CD14-positive monocyte (primary cell): ENCODE measurements at regions of chr10 and their contacts with region 1.

Region 1: DNA sequence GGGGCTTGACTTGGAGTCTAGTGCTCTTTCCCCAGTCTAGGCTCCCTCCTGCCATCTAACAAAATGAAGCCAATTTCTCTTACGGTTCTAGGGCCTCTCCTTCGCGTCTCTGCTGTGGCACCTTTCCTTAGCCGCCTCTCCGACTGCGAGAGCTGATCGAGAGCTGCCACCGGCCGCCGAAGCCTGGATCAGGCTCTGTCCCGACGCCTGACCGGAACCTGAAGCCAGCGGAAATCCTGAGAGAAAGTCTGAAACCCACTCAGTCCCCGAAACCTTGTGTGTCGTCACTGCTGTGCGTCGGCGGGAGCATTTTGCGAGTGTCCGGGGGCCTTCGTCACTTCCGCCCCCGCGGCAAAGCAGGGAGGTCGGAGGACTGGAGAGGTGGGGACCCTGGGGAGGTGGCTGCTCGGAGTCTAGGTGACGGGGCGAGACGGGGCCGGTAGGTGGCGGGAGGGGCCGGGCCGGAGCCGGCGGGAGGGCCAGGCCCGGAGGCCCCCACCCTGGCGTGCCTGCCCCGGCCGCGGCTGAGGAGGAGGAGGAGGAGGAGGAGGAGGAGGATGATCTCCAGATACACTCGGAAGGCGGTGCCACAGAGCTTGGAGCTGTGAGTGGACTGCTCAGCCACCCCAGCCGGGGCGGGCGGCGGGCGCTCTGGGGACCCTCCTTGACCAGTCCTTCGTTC is at the starts of genes ECD and FAM149B1:
- DNase-seq: peak; percentile 86 to 95 (median 91)
- H3K4me3 ChIP-seq: peak within 1 kb of the TSS; percentile 94 to 98 (median 97)
- H3K4me3 Mint-ChIP-seq: peak within 1 kb of the TSS; percentile 98 to 99
- H3K27ac ChIP-seq: peak within 1 kb of the TSS; percentile 96 to 100
- H3K27ac Mint-ChIP-seq: peak within 1 kb of the TSS; percentile 99 to 100 (median 100)
- H3K4me1 ChIP-seq: peaks cover 14 to 26% of the 10 kb centered on the region in 2 donors
- H3K4me1 Mint-ChIP-seq: peaks cover 22% of the 10 kb centered on the region
- H3K27me3 ChIP-seq: no peaks in the 10 kb centered on the region
- H3K27me3 Mint-ChIP-seq: peaks cover 0 to 3% (median 0%) of the 10 kb centered on the region in 3 donors
- CTCF ChIP-seq: no peak
- polyA plus RNA-seq, gene ECD: 14.1 to 20.2 (median 16.7) TPM
- polyA plus RNA-seq, gene FAM149B1: 2.6 to 19.3 (median 2.6) TPM

Region 2: DNA sequence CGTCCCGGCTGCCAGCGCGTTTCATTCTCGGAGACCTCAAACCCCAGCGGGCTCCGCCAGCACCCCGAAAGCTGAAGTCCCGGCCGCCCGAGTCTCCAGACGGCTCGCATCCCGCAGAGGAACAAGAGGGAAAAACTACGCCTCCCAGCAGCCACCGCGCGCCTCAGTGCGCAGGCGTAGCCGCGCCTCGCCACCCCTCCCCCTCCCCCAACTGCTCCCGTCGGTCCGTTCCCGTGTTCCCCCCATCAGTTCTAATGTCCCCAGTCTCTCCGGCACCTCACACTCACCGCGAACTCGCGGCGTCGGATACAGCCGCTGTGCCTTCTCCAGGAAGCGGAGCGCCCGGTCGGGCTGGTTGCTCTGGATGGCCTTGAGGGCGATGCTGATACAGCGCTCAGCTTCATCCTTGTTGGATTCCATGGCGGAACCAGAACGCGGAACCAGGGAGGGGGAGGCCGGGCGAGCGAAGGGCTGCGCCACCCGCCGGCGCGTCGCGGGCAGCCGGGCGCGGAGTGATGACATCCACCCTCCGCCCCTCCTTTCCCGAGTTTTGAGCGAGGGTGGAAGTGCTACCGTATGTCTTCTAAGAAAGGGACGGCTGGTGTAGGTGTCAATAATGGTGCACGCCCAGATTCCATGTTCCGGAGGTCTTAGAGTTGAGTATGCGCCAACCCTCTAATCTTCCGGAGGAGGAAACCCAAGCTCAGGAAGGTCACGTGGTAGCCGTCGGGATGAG is 813.3 kb before region 1 on chr10 and contains the start of gene DNAJB12:
- intact Hi-C with region 1: loop called in 1 of 2 experiments (anchors 5 kb)
- DNase-seq: peak; percentile 89 to 93 (median 93)
- H3K4me3 ChIP-seq: peak within 1 kb of the TSS; percentile 85 to 89 (median 86)
- H3K4me3 Mint-ChIP-seq: peak within 1 kb of the TSS; percentile 97 to 99
- H3K27ac ChIP-seq: peak within 1 kb of the TSS; percentile 88 to 96
- H3K27ac Mint-ChIP-seq: peak within 1 kb of the TSS; percentile 96 to 100 (median 99)
- H3K4me1 ChIP-seq: peaks cover 19 to 23% of the 10 kb centered on the region in 2 donors
- H3K4me1 Mint-ChIP-seq: peaks cover 43% of the 10 kb centered on the region
- H3K27me3 ChIP-seq: no peaks in the 10 kb centered on the region
- H3K27me3 Mint-ChIP-seq: peaks cover 0 to 2% (median 1%) of the 10 kb centered on the region in 3 donors
- CTCF ChIP-seq: no peak
- polyA plus RNA-seq, gene DNAJB12: 26.5 to 42.5 (median 37.9) TPM

Region 3: DNA sequence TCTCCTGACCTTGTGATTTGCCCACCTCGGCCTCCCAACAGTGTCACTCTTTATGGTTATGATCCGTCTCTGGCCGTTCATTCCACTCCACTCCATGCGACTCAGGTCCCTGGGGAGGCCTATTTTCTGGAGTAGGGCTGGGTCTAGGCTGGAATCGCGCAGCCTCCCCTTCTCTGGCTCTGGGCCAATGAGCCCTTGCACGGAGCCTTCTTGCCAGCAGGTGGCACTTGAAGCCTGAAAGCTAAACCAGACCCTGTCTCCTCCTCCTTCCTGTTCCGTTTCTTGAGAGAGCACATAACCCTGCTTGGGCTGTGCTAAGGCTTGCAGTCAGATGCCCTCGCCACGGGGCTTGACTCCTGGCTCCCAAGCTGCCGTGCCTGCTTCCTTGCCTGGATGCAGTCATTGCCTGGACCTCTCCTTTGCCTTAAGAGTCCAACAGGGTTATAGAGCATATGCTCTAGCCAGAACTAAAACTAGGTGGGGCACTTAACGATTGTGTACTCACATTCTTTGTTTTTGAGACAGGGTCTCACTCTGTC is 803.6 kb before region 1 on chr10:
- intact Hi-C with region 1: loop called in 1 of 2 experiments (anchors 5 kb)
- DNase-seq: peak; percentile 80 to 87 (median 85)
- H3K4me3 ChIP-seq: peak overlapping the region in 1 of 3 experiments; percentile 18
- H3K4me3 Mint-ChIP-seq: peak overlapping the region in 1 of 2 donors; percentile 65
- H3K27ac ChIP-seq: peak overlapping the region; percentile 26 to 60
- H3K27ac Mint-ChIP-seq: peak overlapping the region in 5 of 7 donors; percentile 22 to 77 (median 56)
- H3K4me1 ChIP-seq: peaks cover 10 to 11% of the 10 kb centered on the region in 2 donors
- H3K4me1 Mint-ChIP-seq: peaks cover 15% of the 10 kb centered on the region
- H3K27me3 ChIP-seq: no peaks in the 10 kb centered on the region
- H3K27me3 Mint-ChIP-seq: no peaks in the 10 kb centered on the region
- CTCF ChIP-seq: peak; percentile 83

Region 4: GRCh38 chr10:73096449-73097304 is 71.2 kb before region 1 on chr10 and contains the start of gene P4HA1:
- intact Hi-C with region 1: loop called in 1 of 2 experiments (anchors 5 kb)
- DNase-seq: peak; percentile 98 to 99 (median 99)
- H3K4me3 ChIP-seq: peak within 1 kb of the TSS; percentile 58 to 98 (median 93)
- H3K4me3 Mint-ChIP-seq: peak within 1 kb of the TSS; percentile 95 to 96
- H3K27ac ChIP-seq: peak within 1 kb of the TSS; percentile 92 to 96
- H3K27ac Mint-ChIP-seq: peak within 1 kb of the TSS; percentile 87 to 97 (median 95)
- H3K4me1 ChIP-seq: peaks cover 13 to 21% of the 10 kb centered on the region in 2 donors
- H3K4me1 Mint-ChIP-seq: peaks cover 23% of the 10 kb centered on the region
- H3K27me3 ChIP-seq: no peaks in the 10 kb centered on the region
- H3K27me3 Mint-ChIP-seq: no peaks in the 10 kb centered on the region
- CTCF ChIP-seq: peak; percentile 79
- polyA plus RNA-seq, gene P4HA1: 20.1 to 44.3 (median 43.9) TPM

Region 5: GRCh38 chr10:73110345-73110849 is 57.5 kb before region 1 on chr10 and contains the start of gene NUDT13:
- intact Hi-C with region 1: loop called (anchors 5 to 10 kb)
- DNase-seq: peak; percentile 75 to 90 (median 80)
- H3K4me3 ChIP-seq: peak within 1 kb of the TSS; percentile 49 to 96 (median 82)
- H3K4me3 Mint-ChIP-seq: peak within 1 kb of the TSS; percentile 82 to 93
- H3K27ac ChIP-seq: peak within 1 kb of the TSS; percentile 9 to 75
- H3K27ac Mint-ChIP-seq: peak within 1 kb of the TSS; percentile 86 to 94 (median 93)
- H3K4me1 ChIP-seq: peaks cover 5 to 8% of the 10 kb centered on the region in 2 donors
- H3K4me1 Mint-ChIP-seq: peaks cover 12% of the 10 kb centered on the region
- H3K27me3 ChIP-seq: no peaks in the 10 kb centered on the region
- H3K27me3 Mint-ChIP-seq: peaks cover 0 to 2% (median 0%) of the 10 kb centered on the region in 3 donors
- CTCF ChIP-seq: no peak
- polyA plus RNA-seq, gene NUDT13: 0.69 to 4.5 (median 1.0) TPM

Region 6: DNA sequence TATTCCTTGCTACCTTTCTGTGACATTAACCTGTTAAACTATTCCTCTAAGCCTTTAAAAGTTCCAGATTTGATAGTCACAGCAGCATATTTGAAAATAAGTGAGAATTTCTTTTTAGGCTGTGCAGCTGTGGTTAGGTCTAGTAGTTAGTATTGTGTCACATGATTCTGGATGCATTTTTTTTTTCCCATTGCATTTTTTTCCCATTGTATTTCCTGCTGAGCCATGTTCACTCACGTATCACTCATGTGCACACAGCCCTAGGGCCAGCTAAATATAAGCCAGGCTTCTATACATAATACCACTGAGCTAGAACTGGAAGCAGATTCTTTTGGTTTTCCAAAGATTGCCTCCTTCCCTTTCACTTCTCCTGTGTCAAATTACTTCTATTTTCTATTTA is 41.8 kb after region 1 on chr10:
- intact Hi-C with region 1: no loop called
- DNase-seq: no peak
- H3K4me3 ChIP-seq: no peak overlapping the region
- H3K4me3 Mint-ChIP-seq: no peak overlapping the region
- H3K27ac ChIP-seq: no peak overlapping the region
- H3K27ac Mint-ChIP-seq: no peak overlapping the region
- H3K4me1 ChIP-seq: no peaks in the 10 kb centered on the region
- H3K4me1 Mint-ChIP-seq: no peaks in the 10 kb centered on the region
- H3K27me3 ChIP-seq: no peaks in the 10 kb centered on the region
- H3K27me3 Mint-ChIP-seq: no peaks in the 10 kb centered on the region
- CTCF ChIP-seq: no peak

Region 7: GRCh38 chr10:73246783-73247508 is 79.0 kb after region 1 on chr10 and contains the start of gene DNAJC9:
- intact Hi-C with region 1: loop called in 1 of 2 experiments (anchors 5 kb)
- DNase-seq: peak; percentile 84 to 92 (median 92)
- H3K4me3 ChIP-seq: peak within 1 kb of the TSS; percentile 69 to 92 (median 71)
- H3K4me3 Mint-ChIP-seq: peak within 1 kb of the TSS; percentile 91 to 96
- H3K27ac ChIP-seq: peak within 1 kb of the TSS; percentile 51 to 83
- H3K27ac Mint-ChIP-seq: peak within 1 kb of the TSS; percentile 81 to 94 (median 90)
- H3K4me1 ChIP-seq: peaks cover 33 to 53% of the 10 kb centered on the region in 2 donors
- H3K4me1 Mint-ChIP-seq: peaks cover 50% of the 10 kb centered on the region
- H3K27me3 ChIP-seq: no peaks in the 10 kb centered on the region
- H3K27me3 Mint-ChIP-seq: peaks cover 0 to 2% (median 0%) of the 10 kb centered on the region in 3 donors
- CTCF ChIP-seq: no peak
- polyA plus RNA-seq, gene DNAJC9: 2.3 to 7.2 (median 2.4) TPM

Region 8: DNA sequence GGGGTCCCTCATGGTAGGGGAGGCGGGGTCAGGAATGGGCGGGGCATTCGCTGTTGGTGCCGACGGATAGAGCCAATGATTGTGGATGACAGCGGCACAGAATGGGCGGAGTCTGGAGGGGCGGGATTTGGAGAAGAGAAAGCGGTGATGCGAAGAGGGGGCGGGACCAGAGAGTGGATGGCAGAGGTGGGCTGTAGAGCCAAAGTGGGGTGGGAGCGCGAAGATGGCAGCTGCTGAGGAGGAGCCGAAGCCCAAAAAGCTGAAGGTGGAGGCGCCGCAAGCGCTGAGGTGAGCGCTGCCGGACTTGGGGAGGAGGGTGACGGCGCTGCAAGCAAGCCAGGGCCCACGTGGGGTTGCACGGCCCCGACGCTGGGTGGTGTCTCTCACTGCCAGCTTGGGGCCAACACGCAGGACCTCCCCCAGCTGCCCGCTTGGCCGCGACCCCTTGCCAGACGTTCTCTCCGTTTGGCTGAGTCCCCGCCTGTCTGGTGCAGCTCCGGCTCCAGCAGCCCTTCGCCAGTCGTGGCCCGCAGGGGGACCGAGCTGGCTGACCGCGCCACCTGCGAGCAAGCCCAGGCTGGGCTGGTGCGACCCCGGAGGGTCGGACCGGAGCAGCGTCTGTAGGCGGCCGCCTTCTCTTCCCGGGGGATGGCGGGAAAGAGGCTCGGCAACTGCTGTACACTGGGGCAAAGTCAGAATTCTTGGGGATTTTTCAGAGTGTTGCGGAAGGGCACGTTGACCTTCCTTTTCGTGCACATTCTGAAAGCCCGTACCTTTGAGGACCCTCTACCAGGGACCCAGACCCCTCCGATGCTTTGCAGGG is 983.3 kb after region 1 on chr10 and contains the start of gene ADK:
- intact Hi-C with region 1: no loop called
- DNase-seq: peak; percentile 95 to 99 (median 97)
- H3K4me3 ChIP-seq: peak within 1 kb of the TSS; percentile 59 to 99 (median 86)
- H3K4me3 Mint-ChIP-seq: no peak within 1 kb of the TSS
- H3K27ac ChIP-seq: peak within 1 kb of the TSS; percentile 77 to 99
- H3K27ac Mint-ChIP-seq: no peak within 1 kb of the TSS
- H3K4me1 ChIP-seq: peaks cover 29 to 32% of the 10 kb centered on the region in 2 donors
- H3K4me1 Mint-ChIP-seq: peaks cover 38% of the 10 kb centered on the region
- H3K27me3 ChIP-seq: no peaks in the 10 kb centered on the region
- H3K27me3 Mint-ChIP-seq: peaks cover 0 to 4% (median 0%) of the 10 kb centered on the region in 3 donors
- CTCF ChIP-seq: peak; percentile 34
- polyA plus RNA-seq, gene ADK: 6.4 to 38.2 (median 35.7) TPM